Activated naive CD4-positive, alpha-beta T cell treated with anti-CD3 and anti-CD28 coated beads for 36 hours (primary cell): ENCODE measurements at regions of chr10 and their contacts with region 1.

Region 1: DNA sequence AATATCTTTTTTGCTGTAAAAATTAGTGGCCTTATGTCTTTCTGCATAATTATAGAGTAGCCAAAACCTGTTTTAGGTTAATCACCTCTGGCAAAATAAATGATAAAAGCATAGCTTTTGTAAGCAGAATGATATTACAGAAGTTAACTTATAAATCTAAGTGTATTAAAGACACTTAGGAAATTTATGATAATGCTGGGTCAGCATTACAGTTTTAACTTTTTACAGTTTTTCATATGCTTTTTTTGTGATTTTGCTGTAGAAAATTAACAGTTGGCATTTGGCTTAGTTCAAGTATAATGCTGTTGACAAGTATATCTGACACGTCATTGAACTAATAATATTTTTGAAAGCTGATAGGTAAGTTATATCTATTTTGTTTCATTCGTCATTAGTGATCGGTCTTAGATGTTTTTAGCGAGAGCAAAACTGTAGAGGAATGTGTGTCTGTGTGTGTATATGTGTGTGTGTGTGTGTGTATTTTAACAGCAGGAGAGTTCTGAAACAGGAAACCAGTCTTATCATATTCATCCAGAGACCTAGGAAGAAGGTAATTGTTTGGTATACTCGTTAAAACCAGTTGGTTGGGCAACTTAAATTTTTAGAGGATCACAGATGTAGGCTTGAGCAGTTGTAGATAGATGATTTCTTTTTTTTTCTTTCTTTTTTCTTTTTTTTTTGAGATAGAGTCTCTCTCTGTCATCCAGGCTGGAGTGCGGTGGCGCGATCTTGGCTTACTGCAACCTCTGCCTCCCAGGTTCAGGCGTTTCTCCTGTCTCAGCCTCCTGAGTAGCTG is 15.4 kb downstream of the PTEN start:
- DNase-seq: no peak
- H3K4me3 Mint-ChIP-seq: no peak overlapping the region
- H3K27ac Mint-ChIP-seq: no peak overlapping the region
- H3K4me1 Mint-ChIP-seq: peaks cover 38% of the 10 kb centered on the region
- H3K27me3 Mint-ChIP-seq: no peaks in the 10 kb centered on the region

Region 2: GRCh38 chr10:87578842-87579401 is 299.9 kb before region 1 on chr10:
- CTCF ChIA-PET with region 1: no interaction called
- intact Hi-C with region 1: no loop called
- DNase-seq: no peak
- H3K4me3 Mint-ChIP-seq: no peak overlapping the region
- H3K27ac Mint-ChIP-seq: no peak overlapping the region
- H3K4me1 Mint-ChIP-seq: no peaks in the 10 kb centered on the region
- H3K27me3 Mint-ChIP-seq: peaks cover 24% of the 10 kb centered on the region

Region 3: DNA sequence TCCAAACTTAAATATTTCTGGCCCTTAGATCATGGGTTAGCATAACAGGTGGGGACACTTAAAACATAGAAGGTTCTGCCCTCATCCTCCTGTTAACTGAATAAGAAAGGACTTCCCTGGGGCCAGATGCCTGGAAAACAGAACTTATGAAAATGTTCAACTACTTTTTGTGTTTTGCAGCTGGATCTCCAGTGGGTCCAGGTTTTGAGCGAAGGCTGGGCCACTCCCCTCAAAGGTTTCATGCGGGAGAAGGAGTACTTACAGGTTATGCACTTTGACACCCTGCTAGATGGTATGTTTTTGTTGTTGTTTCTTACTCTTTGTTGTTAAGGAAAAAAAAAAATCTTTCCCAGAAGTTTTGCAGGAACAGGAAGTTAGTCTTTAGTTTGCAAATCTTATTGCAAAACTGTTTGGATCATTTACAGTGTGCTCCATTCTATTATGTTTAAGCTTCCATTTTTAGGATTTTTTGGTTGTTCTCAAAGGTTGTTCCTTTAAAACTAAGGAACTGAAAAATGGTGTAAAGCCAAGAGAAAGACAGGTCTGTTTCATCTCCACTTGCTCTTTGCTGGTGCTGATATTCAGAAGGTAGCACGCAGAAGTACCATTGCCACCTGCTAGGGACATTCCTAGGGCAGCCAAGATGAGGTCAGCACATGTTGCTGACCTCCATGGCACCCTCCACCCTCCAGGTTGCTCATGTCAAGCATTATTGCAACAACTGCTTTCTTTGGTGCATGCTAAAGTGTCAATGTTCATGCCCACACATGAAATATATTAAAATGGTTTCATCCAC is 163.1 kb before region 1 on chr10:
- CTCF ChIA-PET with region 1: no interaction called
- intact Hi-C with region 1: no loop called
- DNase-seq: no peak
- H3K4me3 Mint-ChIP-seq: no peak overlapping the region
- H3K27ac Mint-ChIP-seq: no peak overlapping the region
- H3K4me1 Mint-ChIP-seq: peaks cover 4% of the 10 kb centered on the region
- H3K27me3 Mint-ChIP-seq: peaks cover 2% of the 10 kb centered on the region

Region 4: GRCh38 chr10:87915989-87916388 is 37.1 kb after region 1 on chr10:
- CTCF ChIA-PET with region 1: no interaction called
- intact Hi-C with region 1: loop called (anchors 2 kb)
- DNase-seq: no peak
- H3K4me3 Mint-ChIP-seq: no peak overlapping the region
- H3K27ac Mint-ChIP-seq: no peak overlapping the region
- H3K4me1 Mint-ChIP-seq: peaks cover 40% of the 10 kb centered on the region
- H3K27me3 Mint-ChIP-seq: no peaks in the 10 kb centered on the region